Pancreas (tissue), 10 donors: ENCODE measurements at regions of chr22 and their contacts with region 1.

Region 1: DNA sequence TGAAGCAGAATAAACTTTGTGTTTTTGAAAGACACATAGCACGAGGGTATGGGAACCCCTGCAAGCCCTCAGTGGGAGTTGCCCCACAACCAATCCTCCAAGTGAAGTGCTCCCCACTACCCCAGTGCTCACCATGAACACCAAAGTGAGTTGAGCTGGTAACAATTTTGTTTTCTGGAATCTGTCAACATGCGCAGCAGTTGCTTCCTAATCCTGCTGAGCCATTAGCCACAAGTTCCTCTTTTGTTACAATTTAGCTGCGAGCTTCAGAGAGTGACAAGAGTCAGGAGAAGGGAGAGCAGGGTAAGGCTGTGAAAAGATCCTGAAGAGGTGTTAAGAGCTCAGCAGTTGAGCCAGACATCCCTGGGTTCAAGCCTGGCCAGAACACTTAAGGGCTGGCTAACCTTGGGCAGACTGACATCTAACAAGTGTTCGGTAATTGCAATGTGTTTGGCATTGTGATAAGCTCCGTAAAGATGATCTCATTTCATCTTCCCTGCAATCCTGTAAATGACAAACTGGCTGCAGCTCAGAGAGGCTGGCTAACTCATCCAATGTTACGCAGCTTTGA is 24.1 kb upstream of the ASPHD2 start:
- DNase-seq: no peak
- ATAC-seq: peak in 1 of 4 donors; percentile 22
- H3K4me3 ChIP-seq: no peak overlapping the region
- H3K27ac ChIP-seq: no peak overlapping the region
- H3K4me1 ChIP-seq: no peaks in the 10 kb centered on the region
- H3K27me3 ChIP-seq: no peaks in the 10 kb centered on the region
- CTCF ChIP-seq: no peak

Region 2: DNA sequence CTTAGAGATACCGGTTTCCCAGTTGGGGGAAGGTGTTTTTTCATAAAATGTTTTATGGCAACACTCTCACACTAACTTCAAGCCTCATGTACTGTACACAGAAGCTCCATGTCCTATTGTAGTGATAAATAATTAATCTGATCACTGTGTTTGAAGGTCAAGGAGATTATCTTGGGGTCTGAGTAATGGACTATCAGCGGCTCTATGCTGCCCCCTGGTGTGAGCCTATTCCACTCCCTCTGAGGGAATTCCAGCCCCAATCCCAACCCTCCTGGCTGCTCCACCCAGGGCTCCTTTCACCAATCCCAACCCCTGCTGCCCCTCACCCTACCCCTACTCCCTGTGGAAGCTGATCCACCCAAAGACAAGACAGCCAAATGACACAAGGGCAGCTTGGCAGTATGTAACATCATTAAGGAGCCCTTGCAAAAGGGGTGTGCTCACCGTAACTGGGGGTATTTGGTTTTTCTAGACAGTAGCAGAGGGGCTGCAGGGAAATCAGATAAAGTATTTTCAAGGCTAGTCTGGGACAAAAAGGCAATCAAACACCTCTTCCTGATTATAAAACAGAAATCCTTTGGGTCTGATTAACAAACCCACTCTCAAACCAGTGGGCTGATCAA is 56.4 kb after region 1 on chr22:
- intact Hi-C with region 1: loop called in 1 of 3 experiments (anchors 10 kb)
- DNase-seq: peak in 5 of 6 donors; percentile 22 to 82 (median 52)
- ATAC-seq: peak; percentile 73 to 91 (median 86)
- H3K4me3 ChIP-seq: no peak overlapping the region
- H3K27ac ChIP-seq: no peak overlapping the region
- H3K4me1 ChIP-seq: peaks cover 0 to 4% (median 0%) of the 10 kb centered on the region in 3 donors
- H3K27me3 ChIP-seq: no peaks in the 10 kb centered on the region
- CTCF ChIP-seq: peak; percentile 40 to 55 (median 51)